HepG2 (cell line): ENCODE measurements at regions of chr15 and their contacts with region 1.

Region 1: GRCh38 chr15:84633311-84634227 is 20.5 kb downstream of the WDR73 start:
- DNase-seq: peak; percentile 18
- ATAC-seq: peak; percentile 80
- H3K4me3 ChIP-seq: peak overlapping the region; percentile 67 to 83 (median 68)
- H3K27ac ChIP-seq: no peak overlapping the region
- H3K4me1 ChIP-seq: peaks cover 42% of the 10 kb centered on the region
- H3K27me3 ChIP-seq: no peaks in the 10 kb centered on the region; a peak in 1 of 5 replicates
- CTCF ChIP-seq: no peak; the same call in 1 of the 2 replicates
- EP300 ChIP-seq: no peak
- POLR2A ChIP-seq: no peak
- RAD21 ChIP-seq: peak; percentile 40; the same call in 1 of the 2 replicates

Region 2: DNA sequence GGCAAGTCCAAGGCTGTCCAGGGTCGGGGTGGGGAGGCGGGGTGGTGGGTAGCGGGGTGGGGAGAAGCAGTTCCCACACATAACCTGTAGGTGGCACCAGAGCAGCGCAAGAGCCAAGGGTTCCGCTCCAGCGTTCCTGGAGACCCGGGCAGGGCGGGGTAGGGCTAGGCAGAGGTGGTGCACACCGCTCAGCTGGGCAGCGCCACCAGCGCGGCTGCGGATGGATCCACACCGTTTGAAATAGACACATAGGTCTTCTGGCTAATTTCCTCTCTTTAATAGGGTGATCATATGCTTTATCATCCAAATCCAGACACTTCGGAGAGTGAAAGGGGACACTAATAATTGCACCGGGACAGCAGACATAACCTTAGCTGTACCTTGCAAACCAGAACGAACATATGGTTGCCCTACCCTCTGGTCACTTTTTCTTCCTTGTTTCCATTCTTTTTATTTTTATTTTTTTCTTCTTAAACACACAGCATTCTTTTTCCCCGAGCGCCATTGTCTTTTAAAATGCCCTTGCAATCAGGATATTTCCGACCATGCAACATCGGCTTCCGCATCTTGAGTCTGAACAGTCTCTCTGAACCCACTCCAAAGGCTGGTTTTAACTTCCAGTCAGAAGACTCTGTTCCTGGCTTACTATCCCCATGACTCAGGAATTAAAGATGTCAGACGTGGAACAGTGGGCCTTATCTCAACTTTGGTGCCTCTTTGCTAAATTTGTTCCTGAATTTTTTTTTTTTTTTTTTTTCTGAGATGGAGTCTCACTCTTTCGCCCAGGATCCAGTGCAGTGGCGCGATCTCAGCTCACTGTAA is 45.3 kb before region 1 on chr15:
- CTCF ChIA-PET with region 1: no interaction called
- POLR2A ChIA-PET with region 1: interaction called, 9 read pairs
- in situ Hi-C with region 1: no loop called
- intact Hi-C with region 1: loop called (anchors 1 kb)
- DNase-seq: peak; percentile 83
- ATAC-seq: peak; percentile 100
- H3K4me3 ChIP-seq: peak overlapping the region; percentile 41 to 62 (median 50)
- H3K27ac ChIP-seq: no peak overlapping the region
- H3K4me1 ChIP-seq: peaks cover 27% of the 10 kb centered on the region
- H3K27me3 ChIP-seq: no peaks in the 10 kb centered on the region; a peak in 2 of 5 replicates
- CTCF ChIP-seq: peak; percentile 89
- EP300 ChIP-seq: no peak
- POLR2A ChIP-seq: no peak
- RAD21 ChIP-seq: peak; percentile 93

Region 3: GRCh38 chr15:84606653-84607120 is 26.9 kb before region 1 on chr15:
- CTCF ChIA-PET with region 1: no interaction called
- POLR2A ChIA-PET with region 1: interaction called, 94 read pairs
- in situ Hi-C with region 1: no loop called
- intact Hi-C with region 1: loop called (anchors 1 kb)
- DNase-seq: peak; percentile 99
- ATAC-seq: peak; percentile 96
- H3K4me3 ChIP-seq: peak overlapping the region in 2 of 3 experiments; percentile 31 to 47; a peak in 3 of 6 replicates
- H3K27ac ChIP-seq: peak overlapping the region; percentile 87
- H3K4me1 ChIP-seq: peaks cover 84% of the 10 kb centered on the region
- H3K27me3 ChIP-seq: no peaks in the 10 kb centered on the region
- CTCF ChIP-seq: no peak
- EP300 ChIP-seq: peak; percentile 38 to 95; a peak in 2 of 4 replicates
- POLR2A ChIP-seq: peak in 1 of 2 experiments; percentile 29; a peak in 1 of 4 replicates
- RAD21 ChIP-seq: 0 out of 2 replicates have a peak, but pooled peaks have one; percentile 25

Region 4: DNA sequence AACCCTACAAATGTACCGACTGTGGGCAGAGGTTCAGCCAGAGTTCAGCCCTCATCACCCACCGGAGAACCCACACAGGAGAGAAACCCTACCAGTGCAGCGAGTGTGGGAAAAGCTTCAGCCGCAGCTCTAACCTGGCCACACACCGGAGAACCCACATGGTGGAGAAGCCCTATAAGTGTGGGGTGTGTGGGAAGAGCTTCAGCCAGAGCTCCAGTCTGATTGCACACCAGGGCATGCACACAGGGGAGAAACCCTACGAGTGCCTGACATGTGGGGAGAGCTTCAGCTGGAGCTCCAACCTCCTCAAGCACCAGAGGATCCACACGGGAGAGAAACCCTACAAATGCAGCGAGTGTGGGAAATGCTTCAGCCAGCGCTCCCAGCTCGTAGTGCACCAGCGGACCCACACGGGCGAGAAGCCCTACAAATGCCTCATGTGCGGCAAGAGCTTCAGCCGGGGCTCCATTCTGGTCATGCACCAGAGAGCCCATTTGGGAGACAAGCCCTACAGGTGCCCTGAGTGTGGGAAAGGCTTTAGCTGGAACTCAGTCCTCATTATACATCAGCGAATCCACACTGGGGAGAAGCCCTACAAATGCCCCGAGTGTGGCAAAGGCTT is 12.1 kb before region 1 on chr15:
- CTCF ChIA-PET with region 1: no interaction called
- POLR2A ChIA-PET with region 1: interaction called, 16 read pairs
- in situ Hi-C with region 1: no loop called
- intact Hi-C with region 1: no loop called
- DNase-seq: no peak
- ATAC-seq: no peak
- H3K4me3 ChIP-seq: no peak overlapping the region
- H3K27ac ChIP-seq: no peak overlapping the region
- H3K4me1 ChIP-seq: peaks cover 22% of the 10 kb centered on the region
- H3K27me3 ChIP-seq: no peaks in the 10 kb centered on the region
- CTCF ChIP-seq: no peak
- EP300 ChIP-seq: no peak
- POLR2A ChIP-seq: no peak
- RAD21 ChIP-seq: no peak

Region 5: DNA sequence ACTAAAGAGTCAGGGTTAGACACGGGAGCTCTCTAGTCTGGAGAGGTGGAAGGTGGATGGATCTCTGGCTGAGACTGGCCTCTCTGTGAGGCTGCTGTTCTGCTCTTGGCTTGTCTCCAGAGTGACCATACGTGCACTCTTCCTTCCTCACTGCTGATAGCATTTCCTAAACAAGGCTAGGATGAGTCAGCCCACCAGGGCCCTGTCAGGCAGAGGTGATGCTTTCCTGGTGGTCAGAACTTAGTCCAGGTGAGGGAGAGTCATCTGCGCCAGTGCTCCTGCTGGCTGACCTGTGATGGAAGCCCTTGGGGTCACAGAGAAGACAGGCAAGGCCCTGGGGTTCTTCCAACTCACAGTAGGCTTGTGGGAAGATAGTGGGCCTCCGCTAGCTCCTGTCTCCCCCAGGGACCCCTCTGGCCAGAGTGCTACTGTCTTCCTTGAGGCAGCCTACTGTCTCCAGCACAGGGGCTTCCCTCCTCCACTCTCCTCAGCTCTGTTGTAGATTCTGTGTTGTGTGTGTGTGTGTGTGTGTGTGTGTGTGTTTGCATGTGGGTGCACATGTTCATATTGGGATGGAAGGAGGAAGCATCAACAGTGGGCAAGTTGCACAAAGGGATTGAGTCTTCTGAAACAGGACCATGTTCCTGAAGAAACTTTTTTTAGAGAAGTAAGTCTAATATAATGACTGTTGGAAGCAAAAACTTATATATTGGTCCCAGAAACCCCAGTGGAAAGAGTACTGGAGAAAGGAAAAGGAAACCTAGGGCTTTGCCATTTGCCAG is 200.1 kb after region 1 on chr15:
- CTCF ChIA-PET with region 1: no interaction called
- POLR2A ChIA-PET with region 1: no interaction called
- in situ Hi-C with region 1: no loop called
- intact Hi-C with region 1: no loop called
- DNase-seq: no peak
- ATAC-seq: peak; percentile 48; the same call in 2 of the 3 replicates
- H3K4me3 ChIP-seq: no peak overlapping the region
- H3K27ac ChIP-seq: no peak overlapping the region
- H3K4me1 ChIP-seq: no peaks in the 10 kb centered on the region
- H3K27me3 ChIP-seq: peaks cover 0 to 28% of the 10 kb centered on the region in 2 experiments; a peak in 3 of 5 replicates
- CTCF ChIP-seq: no peak
- EP300 ChIP-seq: no peak
- POLR2A ChIP-seq: no peak
- RAD21 ChIP-seq: no peak